Caco-2 (cell line): ENCODE measurements at regions of chr11 and their contacts with region 1.

Region 1: DNA sequence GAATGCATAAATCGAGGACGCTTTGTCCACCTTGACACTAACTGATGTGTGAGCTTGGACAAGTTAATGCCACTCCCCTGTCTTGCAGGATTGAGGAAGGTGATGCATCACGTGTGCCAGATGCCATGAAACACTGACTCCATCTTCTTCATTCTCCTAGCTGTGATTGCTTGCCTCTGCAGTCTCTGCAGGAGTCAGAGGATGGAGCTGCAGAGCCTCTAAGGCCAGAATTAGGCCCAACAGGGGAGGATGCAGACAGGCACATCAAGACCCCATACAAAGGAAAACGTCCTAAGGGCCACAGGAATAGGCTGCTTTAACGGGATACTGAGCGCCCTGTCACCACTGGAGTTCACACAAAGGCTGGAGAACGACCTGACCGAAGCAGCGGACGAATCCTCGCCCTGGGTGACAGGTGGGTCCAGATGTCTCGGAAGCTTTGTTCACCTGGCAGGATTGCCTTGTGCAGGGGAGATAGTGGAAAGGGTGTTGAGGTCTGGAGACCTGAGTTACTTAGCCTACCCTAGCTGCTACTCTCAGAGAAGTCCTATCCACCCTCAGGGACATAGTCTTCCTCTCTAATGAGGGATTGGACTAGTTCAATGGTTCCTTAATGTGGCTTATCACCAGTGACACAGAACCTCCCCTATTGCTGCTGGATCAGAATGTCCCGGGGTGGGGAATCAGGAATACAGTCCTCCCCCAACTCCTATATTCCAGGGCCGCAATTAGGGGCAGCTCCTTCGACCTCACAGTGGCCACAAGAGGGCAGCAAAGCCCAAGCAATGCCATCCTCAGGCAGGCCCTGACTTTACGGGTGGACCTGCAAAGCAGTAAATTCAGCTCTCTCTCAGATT is 32.4 kb downstream of the DBX1 start:
- DNase-seq: peak; percentile 82 to 87
- H3K4me3 ChIP-seq: no peak overlapping the region
- H3K4me3 Mint-ChIP-seq: no peak overlapping the region
- H3K27ac Mint-ChIP-seq: no peak overlapping the region
- H3K4me1 ChIP-seq: no peaks in the 10 kb centered on the region
- H3K4me1 Mint-ChIP-seq: peaks cover 8% of the 10 kb centered on the region
- H3K27me3 ChIP-seq: no peaks in the 10 kb centered on the region
- H3K27me3 Mint-ChIP-seq: peaks cover 2% of the 10 kb centered on the region
- CTCF ChIP-seq: peak; percentile 82 to 89

Region 2: DNA sequence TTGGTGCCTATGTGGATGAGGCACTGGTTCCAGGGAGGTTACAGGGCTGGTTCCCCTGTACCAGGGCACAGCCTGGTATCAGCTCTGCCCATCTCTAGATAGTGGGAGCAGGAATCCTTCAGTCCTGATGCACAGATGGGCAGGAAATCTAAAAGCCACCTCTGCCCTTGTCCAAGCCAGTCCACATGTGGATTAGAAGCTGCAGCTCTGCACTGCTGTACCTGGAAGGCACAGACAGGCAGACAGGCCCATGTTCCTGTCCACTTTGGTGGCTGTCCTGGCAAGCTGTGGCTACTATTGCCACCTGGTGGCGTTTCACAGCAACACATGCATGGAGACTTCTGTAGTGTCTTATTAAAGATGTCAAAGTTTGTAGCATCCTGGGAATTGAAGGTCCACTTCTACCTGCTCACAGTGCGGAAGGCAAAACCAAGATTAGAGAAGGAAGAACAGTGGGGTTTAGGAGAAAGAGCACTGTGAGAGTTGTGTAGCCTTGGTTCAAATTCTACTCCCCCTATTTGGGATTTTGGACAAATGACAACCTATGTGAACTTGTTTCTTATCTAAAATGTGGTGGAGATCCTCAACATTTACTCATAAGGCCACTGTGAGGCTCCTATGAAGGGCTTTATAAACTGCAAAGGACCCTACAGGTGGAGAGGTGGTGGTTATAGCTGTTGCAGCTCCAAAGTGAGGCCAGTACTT is 385.2 kb before region 1 on chr11:
- CTCF ChIA-PET with region 1: no interaction called
- POLR2A ChIA-PET with region 1: no interaction called
- intact Hi-C with region 1: loop called (anchors 10 kb)
- DNase-seq: peak; percentile 82 to 84
- H3K4me3 ChIP-seq: no peak overlapping the region
- H3K4me3 Mint-ChIP-seq: no peak overlapping the region
- H3K27ac Mint-ChIP-seq: no peak overlapping the region
- H3K4me1 ChIP-seq: no peaks in the 10 kb centered on the region
- H3K4me1 Mint-ChIP-seq: no peaks in the 10 kb centered on the region
- H3K27me3 ChIP-seq: no peaks in the 10 kb centered on the region
- H3K27me3 Mint-ChIP-seq: no peaks in the 10 kb centered on the region
- CTCF ChIP-seq: peak; percentile 77 to 86

Region 3: DNA sequence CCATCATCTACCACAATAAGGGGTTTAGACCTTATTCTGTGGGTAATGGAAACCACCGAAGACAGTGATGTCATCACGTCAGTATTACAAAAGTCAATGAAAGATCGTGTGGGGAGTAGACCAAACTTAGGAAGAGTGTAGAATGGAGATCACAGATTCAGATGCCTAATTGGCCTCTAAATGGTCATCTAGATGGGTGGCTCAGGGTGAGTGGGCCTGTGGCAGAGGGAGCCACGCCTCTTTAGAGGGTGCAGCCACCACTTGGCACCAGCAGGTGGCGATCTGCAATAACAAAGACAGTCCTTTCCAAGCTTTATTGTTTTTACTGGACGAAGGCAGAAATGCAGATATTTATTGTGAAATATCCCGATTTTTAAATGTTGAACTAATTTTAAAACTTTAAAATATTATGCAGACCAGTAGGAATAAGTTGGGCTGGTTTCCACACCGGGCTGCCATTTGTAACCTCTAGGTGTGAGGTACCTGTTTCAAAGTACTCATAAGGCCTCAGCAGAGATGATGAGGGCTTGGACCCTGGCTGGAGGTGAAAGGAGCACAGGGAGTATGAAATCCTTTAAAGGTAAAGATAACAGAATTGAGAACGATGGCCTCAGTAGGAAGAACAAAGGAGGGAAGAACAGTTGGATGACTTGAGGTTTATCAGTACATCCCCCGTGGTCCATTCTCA is 189.6 kb before region 1 on chr11:
- CTCF ChIA-PET with region 1: interaction called, 3 read pairs
- POLR2A ChIA-PET with region 1: no interaction called
- intact Hi-C with region 1: loop called (anchors 1 kb)
- DNase-seq: peak; percentile 62 to 74
- H3K4me3 ChIP-seq: no peak overlapping the region
- H3K4me3 Mint-ChIP-seq: no peak overlapping the region
- H3K27ac Mint-ChIP-seq: no peak overlapping the region
- H3K4me1 ChIP-seq: no peaks in the 10 kb centered on the region
- H3K4me1 Mint-ChIP-seq: no peaks in the 10 kb centered on the region
- H3K27me3 ChIP-seq: no peaks in the 10 kb centered on the region
- H3K27me3 Mint-ChIP-seq: no peaks in the 10 kb centered on the region
- CTCF ChIP-seq: peak; percentile 88 to 89

Region 4: GRCh38 chr11:20337526-20338154 is 209.7 kb after region 1 on chr11:
- CTCF ChIA-PET with region 1: interaction called, 5 read pairs
- POLR2A ChIA-PET with region 1: no interaction called
- intact Hi-C with region 1: loop called (anchors 1 kb)
- DNase-seq: peak in 1 of 2 experiments; percentile 43
- H3K4me3 ChIP-seq: no peak overlapping the region
- H3K4me3 Mint-ChIP-seq: no peak overlapping the region
- H3K27ac Mint-ChIP-seq: no peak overlapping the region
- H3K4me1 ChIP-seq: no peaks in the 10 kb centered on the region
- H3K4me1 Mint-ChIP-seq: peaks cover 7% of the 10 kb centered on the region
- H3K27me3 ChIP-seq: no peaks in the 10 kb centered on the region
- H3K27me3 Mint-ChIP-seq: peaks cover 4% of the 10 kb centered on the region
- CTCF ChIP-seq: peak; percentile 63 to 70

Region 5: GRCh38 chr11:20443596-20443995 is 315.7 kb after region 1 on chr11:
- CTCF ChIA-PET with region 1: no interaction called
- POLR2A ChIA-PET with region 1: no interaction called
- intact Hi-C with region 1: loop called (anchors 2 kb)
- DNase-seq: peak in 1 of 2 experiments; percentile 11
- H3K4me3 ChIP-seq: no peak overlapping the region
- H3K4me3 Mint-ChIP-seq: no peak overlapping the region
- H3K27ac Mint-ChIP-seq: no peak overlapping the region
- H3K4me1 ChIP-seq: no peaks in the 10 kb centered on the region
- H3K4me1 Mint-ChIP-seq: no peaks in the 10 kb centered on the region
- H3K27me3 ChIP-seq: no peaks in the 10 kb centered on the region
- H3K27me3 Mint-ChIP-seq: no peaks in the 10 kb centered on the region
- CTCF ChIP-seq: peak; percentile 25 to 50